ENCODE measurements at regions of chr19 and their contacts with region 1.

Region 1: DNA sequence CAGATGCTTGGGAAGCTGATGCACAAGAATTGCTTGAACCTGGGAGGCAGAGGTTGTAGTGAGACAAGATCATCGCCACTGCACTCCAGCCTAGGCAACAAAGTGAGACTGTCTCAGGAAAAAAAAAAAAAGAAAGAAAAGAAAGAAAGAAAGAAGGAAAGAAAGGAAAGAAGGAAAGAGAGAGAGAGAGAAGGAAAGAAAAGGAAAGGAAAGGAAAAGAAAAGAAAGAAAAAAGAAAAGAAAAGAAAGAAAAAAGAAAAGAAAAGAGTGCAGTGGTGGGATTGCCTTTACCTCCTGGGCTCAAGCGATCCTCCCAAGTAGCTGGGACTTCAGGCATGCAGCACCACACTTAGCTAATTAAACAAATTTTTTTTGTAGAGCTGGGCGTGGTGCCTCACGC is 12.9 kb downstream of the OLFM2 start:
- DNase-seq: no peak
- H3K4me3 ChIP-seq: no peak overlapping the region
- H3K4me1 ChIP-seq: peaks cover 1% of the 10 kb centered on the region; the same call in 1 of the 2 replicates
- H3K27me3 ChIP-seq: no peaks in the 10 kb centered on the region

Region 2: GRCh38 chr19:10112895-10113591 is 189.6 kb after region 1 on chr19:
- in situ Hi-C with region 1: no loop called
- DNase-seq: peak in 1 of 2 experiments; percentile 84
- H3K4me3 ChIP-seq: no peak overlapping the region
- H3K4me1 ChIP-seq: no peaks in the 10 kb centered on the region
- H3K27me3 ChIP-seq: no peaks in the 10 kb centered on the region

Region 3: GRCh38 chr19:10380313-10381102 is 457.1 kb after region 1 on chr19 and contains the start of gene TYK2:
- in situ Hi-C with region 1: loop called (anchors 10 kb)
- DNase-seq: peak; percentile 96 to 99
- H3K4me3 ChIP-seq: peak within 1 kb of the TSS; percentile 86
- H3K4me1 ChIP-seq: 0 out of 2 replicates have a peak, but pooled peaks cover 3% of the 10 kb centered on the region
- H3K27me3 ChIP-seq: no peaks in the 10 kb centered on the region